Activated CD4-positive, alpha-beta memory T cell treated with anti-CD3 and anti-CD28 coated beads for 36 hours (primary cell): ENCODE measurements at regions of chr18 and their contacts with region 1.

Region 1: GRCh38 chr18:32271672-32272208 is 81.9 kb downstream of the MEP1B start:
- DNase-seq: peak; percentile 27
- H3K4me3 Mint-ChIP-seq: no peak overlapping the region
- H3K27ac Mint-ChIP-seq: no peak overlapping the region
- H3K4me1 Mint-ChIP-seq: no peaks in the 10 kb centered on the region
- H3K27me3 Mint-ChIP-seq: no peaks in the 10 kb centered on the region

Region 2: DNA sequence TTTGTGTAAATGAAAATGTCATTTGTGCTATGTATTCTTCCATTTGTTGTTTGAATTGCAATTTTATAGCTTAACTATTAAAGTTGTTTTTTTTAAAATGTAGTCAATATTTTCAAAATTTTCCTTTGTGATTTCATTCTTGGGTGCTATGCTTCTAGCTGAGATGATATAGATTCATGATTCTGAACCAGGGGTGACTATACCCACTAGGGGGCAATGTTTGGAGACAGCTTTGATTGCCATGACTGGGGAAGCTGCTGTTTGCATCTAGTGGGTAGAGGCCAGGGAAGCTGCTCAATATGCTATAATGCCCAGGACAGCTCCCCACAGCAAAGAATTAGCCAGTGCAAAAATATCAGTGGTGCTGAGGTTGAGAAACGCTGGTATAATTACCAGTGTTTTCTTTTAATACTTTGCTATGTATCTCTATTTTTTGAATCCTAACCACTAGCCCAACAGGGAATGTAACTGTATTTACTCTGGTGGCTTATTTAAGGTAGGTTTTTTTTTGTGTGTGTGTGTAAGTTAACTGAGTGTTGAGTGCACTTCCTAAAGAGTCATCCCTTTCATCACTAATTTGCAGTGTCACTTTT is 17.8 kb after region 1 on chr18:
- CTCF ChIA-PET with region 1: interaction called, 10 read pairs
- POLR2A ChIA-PET with region 1: no interaction called
- intact Hi-C with region 1: no loop called
- DNase-seq: peak; percentile 38
- H3K4me3 Mint-ChIP-seq: no peak overlapping the region
- H3K27ac Mint-ChIP-seq: no peak overlapping the region
- H3K4me1 Mint-ChIP-seq: no peaks in the 10 kb centered on the region
- H3K27me3 Mint-ChIP-seq: peaks cover 9% of the 10 kb centered on the region